Heart right ventricle (tissue), 16 donors: ENCODE measurements at regions of chr11 and their contacts with region 1.

Region 1: GRCh38 chr11:30635401-30635989 is 49.3 kb upstream of the MPPED2 start:
- DNase-seq: peak; percentile 6 to 18
- ATAC-seq: peak in 5 of 8 donors; percentile 33 to 81 (median 44)
- H3K4me3 ChIP-seq: peak overlapping the region in 2 of 10 donors; percentile 2 to 32
- H3K27ac ChIP-seq: no peak overlapping the region
- H3K4me1 ChIP-seq: no peaks in the 10 kb centered on the region
- H3K27me3 ChIP-seq: peaks cover 0 to 4% (median 0%) of the 10 kb centered on the region in 7 donors
- CTCF ChIP-seq: no peak

Region 2: GRCh38 chr11:30406978-30407762 is 228.3 kb before region 1 on chr11:
- intact Hi-C with region 1: loop called in 1 of 10 experiments (anchors 5 kb)
- DNase-seq: peak in 1 of 2 donors; percentile 22
- ATAC-seq: peak; percentile 52 to 97 (median 81)
- H3K4me3 ChIP-seq: no peak overlapping the region
- H3K27ac ChIP-seq: peak overlapping the region in 1 of 10 donors; percentile 18
- H3K4me1 ChIP-seq: no peaks in the 10 kb centered on the region
- H3K27me3 ChIP-seq: no peaks in the 10 kb centered on the region
- CTCF ChIP-seq: no peak